ENCODE measurements at regions of chr4 and their contacts with region 1.

Region 1: GRCh38 chr4:88659055-88659889 is 38.4 kb downstream of the NAP1L5 start:
- DNase-seq: peak; percentile 39 to 54
- H3K4me3 ChIP-seq: no peak overlapping the region
- H3K27ac ChIP-seq: peak overlapping the region; percentile 21 to 48
- H3K4me1 ChIP-seq: no peaks in the 10 kb centered on the region
- H3K27me3 ChIP-seq: no peaks in the 10 kb centered on the region
- CTCF ChIP-seq: peak; percentile 66 to 78 (median 70)
- POLR2A ChIP-seq: no peak

Region 2: GRCh38 chr4:88143504-88143903 is 515.8 kb before region 1 on chr4:
- intact Hi-C with region 1: no loop called
- DNase-seq: no peak
- H3K4me3 ChIP-seq: no peak overlapping the region
- H3K27ac ChIP-seq: peak overlapping the region in 1 of 2 donors; percentile 26
- H3K4me1 ChIP-seq: no peaks in the 10 kb centered on the region
- H3K27me3 ChIP-seq: no peaks in the 10 kb centered on the region
- CTCF ChIP-seq: no peak
- POLR2A ChIP-seq: no peak

Region 3: DNA sequence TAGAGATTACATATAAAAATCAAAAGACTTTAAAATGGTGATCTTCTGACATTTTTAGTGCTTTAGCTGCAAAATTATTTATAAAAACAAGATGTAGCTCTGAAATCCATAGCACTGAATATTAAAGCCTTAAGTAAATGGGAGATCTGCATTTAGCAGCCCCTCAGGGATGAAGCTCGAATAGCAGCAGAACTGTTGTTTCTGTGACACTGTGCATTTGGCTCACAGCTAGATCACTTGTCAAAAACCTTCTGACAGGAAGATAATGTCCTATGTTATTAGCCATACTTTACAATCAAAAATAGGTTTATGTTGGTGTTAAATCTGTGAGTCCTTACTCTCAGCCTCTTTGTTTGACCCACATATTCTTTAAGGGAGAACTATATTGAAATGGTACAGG is 121.6 kb before region 1 on chr4:
- intact Hi-C with region 1: loop called (anchors 2 kb)
- DNase-seq: no peak
- H3K4me3 ChIP-seq: no peak overlapping the region
- H3K27ac ChIP-seq: no peak overlapping the region
- H3K4me1 ChIP-seq: no peaks in the 10 kb centered on the region
- H3K27me3 ChIP-seq: no peaks in the 10 kb centered on the region
- CTCF ChIP-seq: no peak
- POLR2A ChIP-seq: no peak

Region 4: GRCh38 chr4:89021684-89022083 is 362.4 kb after region 1 on chr4:
- intact Hi-C with region 1: no loop called
- DNase-seq: no peak
- H3K4me3 ChIP-seq: no peak overlapping the region
- H3K27ac ChIP-seq: no peak overlapping the region
- H3K4me1 ChIP-seq: no peaks in the 10 kb centered on the region
- H3K27me3 ChIP-seq: no peaks in the 10 kb centered on the region
- CTCF ChIP-seq: no peak
- POLR2A ChIP-seq: no peak

Measured in uterus (tissue), 4 donors.